ENCODE measurements at regions of chr1 and their contacts with region 1.

Region 1: DNA sequence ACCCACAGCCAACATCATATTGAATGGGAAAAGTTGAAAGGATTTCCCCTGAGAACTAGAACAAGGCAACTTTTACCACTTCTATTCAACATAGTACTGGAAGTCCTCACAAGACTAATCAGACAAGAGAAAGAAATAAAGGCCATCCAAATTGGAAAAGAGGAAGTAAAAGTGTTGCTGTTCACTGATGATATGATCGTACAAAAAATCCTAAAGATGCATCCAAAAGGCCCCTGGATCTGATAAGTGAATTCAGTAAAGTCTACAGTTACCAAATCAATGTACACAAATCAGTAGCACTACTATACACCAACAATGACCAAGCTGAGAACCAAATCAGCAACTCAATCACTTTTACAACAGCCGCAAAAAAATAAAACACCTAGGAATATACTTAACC is 28.3 kb downstream of the RAB3GAP2 start:
- DNase-seq: no peak
- H3K4me3 Mint-ChIP-seq: no peak overlapping the region
- H3K27ac Mint-ChIP-seq: no peak overlapping the region
- H3K4me1 Mint-ChIP-seq: peaks cover 15% of the 10 kb centered on the region
- H3K27me3 Mint-ChIP-seq: no peaks in the 10 kb centered on the region

Region 2: GRCh38 chr1:220189750-220190347 is 54.1 kb before region 1 on chr1:
- intact Hi-C with region 1: no loop called
- DNase-seq: no peak
- H3K4me3 Mint-ChIP-seq: no peak overlapping the region
- H3K27ac Mint-ChIP-seq: no peak overlapping the region
- H3K4me1 Mint-ChIP-seq: no peaks in the 10 kb centered on the region
- H3K27me3 Mint-ChIP-seq: no peaks in the 10 kb centered on the region

Region 3: DNA sequence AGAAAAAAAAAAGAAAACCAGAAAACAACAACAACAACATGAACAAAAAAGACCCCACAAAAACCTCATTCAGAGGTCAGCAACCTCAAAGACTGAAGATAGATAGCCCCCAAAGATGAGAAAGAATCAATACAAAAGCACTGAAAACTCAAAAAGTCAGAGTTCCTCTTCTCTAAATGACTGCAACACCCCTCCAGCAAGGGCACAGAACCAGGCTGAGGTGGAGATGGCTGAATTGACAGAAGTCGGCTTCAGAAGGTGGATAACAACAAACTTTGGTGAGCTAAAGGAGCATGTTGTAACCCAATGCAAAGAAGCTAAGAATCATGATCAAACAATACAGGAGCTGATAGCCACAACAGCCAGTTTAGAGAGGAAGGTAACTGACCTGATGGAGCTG is 11.3 kb after region 1 on chr1:
- intact Hi-C with region 1: loop called (anchors 1 kb)
- DNase-seq: no peak
- H3K4me3 Mint-ChIP-seq: no peak overlapping the region
- H3K27ac Mint-ChIP-seq: no peak overlapping the region
- H3K4me1 Mint-ChIP-seq: peaks cover 25% of the 10 kb centered on the region
- H3K27me3 Mint-ChIP-seq: no peaks in the 10 kb centered on the region

Measured in activated T-helper 2 cell treated with anti-CD3 and anti-CD28 coated beads, Interferon-gamma antibody, Interleukin-2, Interleukin-4, amounts not matched to agents 10 μg/mL and 5 μg/mL and 100 μg/mL, durations not matched to agents 14 hours and 24 hours and 36 hours (primary cell).